Left cardiac atrium (tissue), 4 donors: ENCODE measurements at regions of chr3 and their contacts with region 1.

Region 1: GRCh38 chr3:62622553-62623193 is 249.3 kb upstream of the FEZF2 start:
- DNase-seq: no peak
- ATAC-seq: peak; percentile 53 to 73

Region 2: GRCh38 chr3:62659622-62660021 is 36.9 kb after region 1 on chr3:
- intact Hi-C with region 1: no loop called
- DNase-seq: no peak
- ATAC-seq: no peak

Region 3: GRCh38 chr3:62843508-62843907 is 220.8 kb after region 1 on chr3:
- intact Hi-C with region 1: no loop called
- DNase-seq: no peak
- ATAC-seq: no peak

Region 4: DNA sequence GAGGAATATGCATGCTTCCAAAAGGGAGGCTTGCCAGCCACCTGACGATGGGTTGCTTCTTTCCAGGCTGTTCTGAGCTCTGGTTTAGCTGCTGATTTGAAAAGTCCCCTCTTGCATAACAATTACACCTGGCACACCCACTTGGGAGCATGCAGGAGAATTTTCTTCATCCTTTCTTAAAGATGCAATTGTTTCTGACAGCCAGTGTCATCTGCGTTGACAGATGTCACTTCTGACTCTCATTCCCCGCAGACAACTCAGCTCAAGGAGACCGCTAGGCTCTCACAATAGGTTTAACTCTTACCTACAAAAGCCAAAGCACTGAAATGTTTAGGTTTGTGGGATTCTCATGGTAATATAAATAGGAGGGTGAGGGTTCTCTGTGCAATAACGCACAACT is 469.8 kb after region 1 on chr3:
- intact Hi-C with region 1: no loop called
- DNase-seq: no peak
- ATAC-seq: no peak

Region 5: DNA sequence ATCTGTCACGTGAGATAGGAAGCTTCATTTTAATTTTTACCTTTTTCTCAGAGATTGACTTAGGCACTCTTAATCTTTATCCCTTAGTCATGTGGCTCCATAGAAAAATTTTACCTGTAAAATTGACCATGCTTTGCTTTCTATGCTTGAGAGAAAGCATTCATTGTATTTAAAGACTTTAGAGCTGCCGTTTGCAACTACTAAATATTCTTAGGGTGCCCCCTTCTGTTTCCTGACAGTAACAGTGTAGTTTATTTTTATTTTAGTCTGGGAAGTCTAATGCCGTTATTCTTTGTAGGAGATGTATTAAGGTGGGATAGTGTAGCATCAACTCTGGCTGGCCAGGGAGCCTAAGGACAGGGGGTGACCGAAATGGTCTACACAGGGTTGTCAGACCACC is 571.0 kb after region 1 on chr3:
- intact Hi-C with region 1: loop called in 1 of 2 experiments (anchors 10 kb)
- DNase-seq: no peak
- ATAC-seq: no peak

Region 6: GRCh38 chr3:63228087-63229023 is 605.7 kb after region 1 on chr3:
- intact Hi-C with region 1: loop called in 1 of 2 experiments (anchors 2 kb)
- DNase-seq: no peak
- ATAC-seq: peak; percentile 55 to 63